ENCODE measurements at regions of chr7 and their contacts with region 1.

Region 1: DNA sequence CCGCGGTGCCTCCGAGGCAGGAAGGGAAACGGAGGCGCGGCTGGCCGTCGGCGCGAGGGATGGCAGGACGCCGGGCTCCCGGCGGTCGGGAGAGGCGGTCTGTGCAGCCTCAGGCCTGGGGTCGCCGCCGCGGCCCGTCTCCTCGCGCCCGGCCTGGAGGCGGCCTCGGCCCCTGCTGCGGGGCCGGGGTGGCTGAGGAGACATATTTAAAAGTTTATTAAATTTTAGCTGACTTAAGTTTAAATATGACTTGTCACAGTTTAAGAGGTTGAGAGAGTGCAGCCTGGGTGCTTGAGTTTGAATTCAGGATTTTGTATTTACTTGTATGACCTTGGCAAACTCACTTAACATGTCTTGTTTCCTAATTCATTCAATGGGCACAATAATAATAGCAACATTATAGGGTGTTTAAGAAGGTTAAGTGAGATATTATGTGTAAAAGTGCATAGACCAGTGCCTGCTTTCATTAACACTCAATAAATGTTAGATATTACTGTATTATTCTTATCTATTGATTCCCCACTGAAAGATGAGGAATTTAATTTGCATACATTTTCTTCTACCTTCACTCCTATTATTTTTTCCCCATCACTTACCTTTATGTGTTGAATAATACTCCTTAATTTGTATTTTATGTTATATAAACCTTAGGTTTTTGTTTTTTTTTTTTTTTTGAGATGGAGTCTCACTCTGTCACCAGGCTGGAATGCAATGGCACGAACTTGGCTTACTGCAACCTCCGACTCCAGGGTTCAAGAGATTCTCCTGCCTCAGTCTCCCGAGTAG is 718 bp downstream of the DYNC2I1 start:
- DNase-seq: no peak
- H3K4me3 Mint-ChIP-seq: peak overlapping the region; percentile 99
- H3K27ac Mint-ChIP-seq: peak overlapping the region; percentile 36
- H3K4me1 Mint-ChIP-seq: peaks cover 32% of the 10 kb centered on the region
- H3K27me3 Mint-ChIP-seq: no peaks in the 10 kb centered on the region

Region 2: GRCh38 chr7:157932498-157933218 is 924.4 kb before region 1 on chr7:
- CTCF ChIA-PET with region 1: no interaction called
- intact Hi-C with region 1: loop called (anchors 5 kb)
- DNase-seq: peak; percentile 31
- H3K4me3 Mint-ChIP-seq: peak overlapping the region; percentile 26
- H3K27ac Mint-ChIP-seq: peak overlapping the region; percentile 95
- H3K4me1 Mint-ChIP-seq: peaks cover 4% of the 10 kb centered on the region
- H3K27me3 Mint-ChIP-seq: peaks cover 7% of the 10 kb centered on the region

Region 3: DNA sequence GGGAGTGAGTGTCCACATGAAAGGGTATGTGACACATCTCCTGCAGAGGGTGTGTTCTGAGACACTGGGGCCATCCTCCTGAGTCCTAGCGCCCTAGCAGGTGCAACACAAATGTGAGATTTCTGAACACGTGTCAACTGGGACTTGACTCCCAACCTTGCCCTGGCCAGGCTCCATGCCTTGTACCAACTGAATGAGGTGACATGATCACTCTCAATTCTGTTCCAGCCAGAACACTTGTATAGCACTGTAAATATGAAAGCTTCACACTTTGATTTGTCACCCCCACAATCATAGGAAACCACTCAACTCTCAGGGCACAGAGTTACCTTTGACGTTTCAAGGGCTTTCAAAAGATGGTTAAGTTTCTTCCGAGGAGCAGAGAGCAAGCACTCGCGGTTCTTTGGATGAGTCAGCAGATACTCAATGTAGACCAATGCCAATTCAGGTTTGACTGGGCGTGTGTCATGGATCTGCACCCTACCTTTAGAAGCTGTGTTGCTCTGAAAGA is 201.1 kb before region 1 on chr7:
- CTCF ChIA-PET with region 1: no interaction called
- intact Hi-C with region 1: loop called (anchors 5 kb)
- DNase-seq: peak; percentile 90
- H3K4me3 Mint-ChIP-seq: no peak overlapping the region
- H3K27ac Mint-ChIP-seq: peak overlapping the region; percentile 84
- H3K4me1 Mint-ChIP-seq: peaks cover 21% of the 10 kb centered on the region
- H3K27me3 Mint-ChIP-seq: no peaks in the 10 kb centered on the region

Region 4: GRCh38 chr7:158704704-158705468 is 152.2 kb before region 1 on chr7 and contains the start of gene NCAPG2:
- CTCF ChIA-PET with region 1: no interaction called
- intact Hi-C with region 1: loop called (anchors 1 kb)
- DNase-seq: peak; percentile 98
- H3K4me3 Mint-ChIP-seq: peak within 1 kb of the TSS; percentile 82
- H3K27ac Mint-ChIP-seq: peak within 1 kb of the TSS; percentile 85
- H3K4me1 Mint-ChIP-seq: peaks cover 38% of the 10 kb centered on the region
- H3K27me3 Mint-ChIP-seq: no peaks in the 10 kb centered on the region
- total RNA-seq, gene NCAPG2: 145 to 149 TPM

Region 5: GRCh38 chr7:158811461-158811860 is 45.6 kb before region 1 on chr7:
- CTCF ChIA-PET with region 1: no interaction called
- intact Hi-C with region 1: loop called (anchors 2 kb)
- DNase-seq: peak; percentile 82
- H3K4me3 Mint-ChIP-seq: peak overlapping the region; percentile 62
- H3K27ac Mint-ChIP-seq: peak overlapping the region; percentile 95
- H3K4me1 Mint-ChIP-seq: peaks cover 81% of the 10 kb centered on the region
- H3K27me3 Mint-ChIP-seq: no peaks in the 10 kb centered on the region

Region 6: DNA sequence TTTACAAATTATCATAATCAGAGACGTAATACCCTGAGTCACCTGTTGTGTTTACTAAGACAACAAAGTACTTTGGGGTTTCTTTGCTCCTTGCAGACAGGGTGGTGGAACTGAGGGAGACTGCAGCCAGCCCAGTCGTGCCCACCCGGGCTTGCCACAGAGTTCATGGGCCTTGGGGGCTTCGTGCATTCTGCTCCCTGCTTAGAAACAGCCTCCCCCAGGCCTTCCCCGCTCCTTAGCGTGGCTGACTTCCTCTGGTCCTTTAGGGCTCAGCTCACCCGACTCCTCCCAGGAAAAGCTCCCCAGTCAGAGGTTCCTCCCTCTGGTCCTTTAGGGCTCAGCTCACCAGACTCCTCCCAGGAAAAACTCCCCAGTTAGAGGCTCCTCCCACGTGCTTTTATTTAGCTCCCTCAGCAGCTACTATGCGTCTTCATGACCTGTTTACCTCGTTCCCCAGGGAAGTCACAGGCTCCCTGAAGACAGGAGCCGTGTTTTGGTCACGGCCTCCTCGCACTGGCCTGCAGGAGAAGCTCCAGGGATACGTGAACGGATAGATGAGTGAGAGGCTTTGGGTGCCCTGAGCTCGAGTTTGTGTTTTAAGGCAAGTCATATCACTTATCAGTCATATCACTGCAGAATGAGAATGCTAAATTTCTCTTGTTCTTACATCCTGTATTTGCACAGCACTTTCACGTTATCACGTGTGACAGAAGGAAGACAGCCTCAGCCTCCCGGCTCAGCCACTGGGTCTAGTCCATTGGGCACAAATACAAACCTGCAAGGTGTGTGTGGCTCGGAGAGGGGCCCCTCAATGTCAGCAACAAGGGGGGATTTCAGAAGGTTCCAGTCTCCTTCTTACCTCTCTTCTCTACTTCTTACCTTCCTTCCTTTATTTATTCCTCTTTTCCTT is 340.2 kb after region 1 on chr7:
- CTCF ChIA-PET with region 1: no interaction called
- intact Hi-C with region 1: no loop called
- DNase-seq: peak; percentile 70
- H3K4me3 Mint-ChIP-seq: peak overlapping the region; percentile 64
- H3K27ac Mint-ChIP-seq: peak overlapping the region; percentile 87
- H3K4me1 Mint-ChIP-seq: peaks cover 28% of the 10 kb centered on the region
- H3K27me3 Mint-ChIP-seq: no peaks in the 10 kb centered on the region